CD4-positive, alpha-beta T cell (primary cell): ENCODE measurements at regions of chr18 and their contacts with region 1.

Region 1: GRCh38 chr18:11937874-11938478 is 29.9 kb upstream of the MPPE1 start:
- DNase-seq: peak; percentile 57 to 86 (median 71)
- ATAC-seq: peak; percentile 68
- H3K4me3 ChIP-seq: no peak overlapping the region
- H3K4me3 Mint-ChIP-seq: no peak overlapping the region
- H3K27ac ChIP-seq: no peak overlapping the region
- H3K27ac Mint-ChIP-seq: no peak overlapping the region
- H3K4me1 ChIP-seq: no peaks in the 10 kb centered on the region
- H3K4me1 Mint-ChIP-seq: peaks cover 4% of the 10 kb centered on the region
- H3K27me3 ChIP-seq: no peaks in the 10 kb centered on the region
- H3K27me3 Mint-ChIP-seq: no peaks in the 10 kb centered on the region
- CTCF ChIP-seq: peak; percentile 77

Region 2: GRCh38 chr18:10851824-10852319 is 1086.1 kb before region 1 on chr18:
- CTCF ChIA-PET with region 1: no interaction called
- POLR2A ChIA-PET with region 1: no interaction called
- intact Hi-C with region 1: loop called in 1 of 2 experiments (anchors 5 kb)
- DNase-seq: peak in 3 of 14 experiments; percentile 25 to 39 (median 28)
- ATAC-seq: no peak
- H3K4me3 ChIP-seq: no peak overlapping the region
- H3K4me3 Mint-ChIP-seq: no peak overlapping the region
- H3K27ac ChIP-seq: no peak overlapping the region
- H3K27ac Mint-ChIP-seq: no peak overlapping the region
- H3K4me1 ChIP-seq: no peaks in the 10 kb centered on the region
- H3K4me1 Mint-ChIP-seq: no peaks in the 10 kb centered on the region
- H3K27me3 ChIP-seq: peaks cover 0 to 3% of the 10 kb centered on the region in 2 experiments
- H3K27me3 Mint-ChIP-seq: peaks cover 4% of the 10 kb centered on the region
- CTCF ChIP-seq: peak; percentile 74

Region 3: GRCh38 chr18:11733031-11733430 is 204.9 kb before region 1 on chr18:
- CTCF ChIA-PET with region 1: interaction called, 4 read pairs
- POLR2A ChIA-PET with region 1: no interaction called
- intact Hi-C with region 1: loop called (anchors 1 to 5 kb)
- DNase-seq: peak; percentile 33 to 78 (median 58)
- ATAC-seq: peak; percentile 56
- H3K4me3 ChIP-seq: no peak overlapping the region
- H3K4me3 Mint-ChIP-seq: no peak overlapping the region
- H3K27ac ChIP-seq: no peak overlapping the region
- H3K27ac Mint-ChIP-seq: no peak overlapping the region
- H3K4me1 ChIP-seq: peaks cover 4% of the 10 kb centered on the region
- H3K4me1 Mint-ChIP-seq: no peaks in the 10 kb centered on the region
- H3K27me3 ChIP-seq: peaks cover 8 to 11% of the 10 kb centered on the region in 2 experiments
- H3K27me3 Mint-ChIP-seq: peaks cover 54% of the 10 kb centered on the region
- CTCF ChIP-seq: peak; percentile 85

Region 4: GRCh38 chr18:11995445-11996189 is 57.6 kb after region 1 on chr18:
- CTCF ChIA-PET with region 1: interaction called, 79 read pairs
- POLR2A ChIA-PET with region 1: interaction called, 12 read pairs
- intact Hi-C with region 1: loop called (anchors 1 kb)
- DNase-seq: peak; percentile 32 to 79 (median 50)
- ATAC-seq: peak; percentile 83
- H3K4me3 ChIP-seq: no peak overlapping the region
- H3K4me3 Mint-ChIP-seq: peak overlapping the region; percentile 53
- H3K27ac ChIP-seq: no peak overlapping the region
- H3K27ac Mint-ChIP-seq: no peak overlapping the region
- H3K4me1 ChIP-seq: peaks cover 11% of the 10 kb centered on the region
- H3K4me1 Mint-ChIP-seq: peaks cover 10% of the 10 kb centered on the region
- H3K27me3 ChIP-seq: no peaks in the 10 kb centered on the region
- H3K27me3 Mint-ChIP-seq: no peaks in the 10 kb centered on the region
- CTCF ChIP-seq: peak; percentile 72

Region 5: DNA sequence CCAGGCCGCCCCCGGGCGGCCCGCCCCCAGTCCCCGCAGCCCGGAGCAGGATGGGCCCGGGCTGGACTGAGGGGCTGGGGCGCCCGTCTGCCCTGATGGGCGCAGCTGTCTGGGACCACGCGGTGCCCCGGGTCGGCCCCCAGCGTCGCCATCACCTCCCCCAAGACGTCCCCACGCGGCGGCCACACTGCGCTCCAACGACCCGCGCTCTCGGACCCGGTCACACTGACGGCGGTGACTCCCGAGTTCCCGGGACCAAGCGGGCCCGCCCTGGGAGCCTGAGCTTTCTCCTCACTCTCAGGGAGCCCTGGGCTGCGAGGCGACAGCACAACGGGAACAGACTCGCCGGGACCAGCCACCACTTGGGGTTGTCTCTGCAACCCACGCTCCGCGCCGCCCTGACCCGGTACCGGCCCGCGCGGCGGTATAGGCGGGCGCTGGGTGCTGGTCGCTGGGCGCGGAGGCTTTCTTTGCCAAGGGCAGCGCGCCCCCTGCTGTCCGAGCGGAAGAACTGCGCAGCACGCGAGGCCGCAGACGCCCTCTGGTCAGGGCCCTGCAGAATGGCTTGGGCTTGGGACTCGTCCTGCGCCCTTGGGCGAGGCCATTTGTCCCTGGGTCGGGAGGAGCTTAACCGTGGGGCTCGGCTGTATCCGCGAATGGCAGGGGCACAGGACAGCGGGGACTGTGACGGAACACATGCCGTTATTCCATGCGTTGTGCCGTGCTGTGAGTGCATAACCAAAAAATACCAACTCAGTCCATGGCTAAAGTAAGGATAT is 100.9 kb after region 1 on chr18:
- CTCF ChIA-PET with region 1: interaction called, 15 read pairs
- POLR2A ChIA-PET with region 1: no interaction called
- intact Hi-C with region 1: loop called (anchors 1 kb)
- DNase-seq: peak; percentile 47 to 86 (median 66)
- ATAC-seq: peak; percentile 90
- H3K4me3 ChIP-seq: peak overlapping the region; percentile 51
- H3K4me3 Mint-ChIP-seq: no peak overlapping the region
- H3K27ac ChIP-seq: no peak overlapping the region
- H3K27ac Mint-ChIP-seq: no peak overlapping the region
- H3K4me1 ChIP-seq: peaks cover 13% of the 10 kb centered on the region
- H3K4me1 Mint-ChIP-seq: peaks cover 5% of the 10 kb centered on the region
- H3K27me3 ChIP-seq: peaks cover 6 to 15% of the 10 kb centered on the region in 2 experiments
- H3K27me3 Mint-ChIP-seq: peaks cover 29% of the 10 kb centered on the region
- CTCF ChIP-seq: peak; percentile 98

Region 6: DNA sequence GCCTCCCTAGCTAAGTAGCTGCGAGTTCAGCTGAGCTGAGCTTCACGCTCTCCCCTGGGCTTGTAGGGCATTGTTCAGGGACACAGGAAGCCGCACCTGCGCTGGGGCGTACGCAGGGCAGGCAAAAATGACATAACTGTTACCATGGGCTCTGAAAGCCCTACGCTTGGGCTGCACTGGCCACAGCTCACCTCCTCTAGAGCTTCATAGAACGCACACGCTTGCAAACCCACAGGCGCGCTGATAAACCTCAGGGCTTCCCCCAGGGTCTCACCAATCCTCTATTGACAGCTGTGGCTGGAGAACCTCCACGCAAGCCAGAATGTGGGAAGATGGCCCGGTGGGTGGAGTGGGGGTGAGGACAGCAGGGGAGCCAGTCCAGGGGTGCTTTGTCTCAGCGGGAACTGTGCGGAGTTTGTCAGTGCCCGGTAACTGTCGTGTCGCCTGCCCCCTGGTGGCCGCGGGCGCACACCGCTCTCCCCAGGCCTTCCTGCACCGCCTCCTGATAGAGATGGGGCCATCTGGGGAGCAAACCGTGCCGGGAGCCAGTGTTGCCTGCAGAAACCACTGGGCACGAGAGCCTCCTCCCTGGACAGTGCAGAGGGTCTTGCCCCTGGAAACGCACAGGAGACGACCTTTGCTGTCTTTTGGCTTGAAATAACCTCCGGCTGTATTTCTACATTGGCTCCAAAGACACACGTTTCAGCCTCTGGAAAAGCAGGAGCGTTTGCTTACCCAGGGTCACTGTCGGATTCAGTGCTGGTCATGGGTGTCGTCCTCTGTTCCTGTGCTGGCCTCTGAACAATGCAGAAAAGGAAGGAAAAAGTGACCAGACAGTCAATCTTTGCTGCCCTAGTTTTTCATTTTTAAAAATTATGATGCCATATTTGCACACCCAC is 299.2 kb after region 1 on chr18:
- CTCF ChIA-PET with region 1: no interaction called
- POLR2A ChIA-PET with region 1: no interaction called
- intact Hi-C with region 1: loop called in 1 of 2 experiments (anchors 5 kb)
- DNase-seq: peak; percentile 13 to 68 (median 44)
- ATAC-seq: peak; percentile 81
- H3K4me3 ChIP-seq: no peak overlapping the region
- H3K4me3 Mint-ChIP-seq: no peak overlapping the region
- H3K27ac ChIP-seq: no peak overlapping the region
- H3K27ac Mint-ChIP-seq: no peak overlapping the region
- H3K4me1 ChIP-seq: peaks cover 3% of the 10 kb centered on the region
- H3K4me1 Mint-ChIP-seq: no peaks in the 10 kb centered on the region
- H3K27me3 ChIP-seq: peaks cover 0 to 5% of the 10 kb centered on the region in 2 experiments
- H3K27me3 Mint-ChIP-seq: peaks cover 41% of the 10 kb centered on the region
- CTCF ChIP-seq: peak; percentile 76

Region 7: DNA sequence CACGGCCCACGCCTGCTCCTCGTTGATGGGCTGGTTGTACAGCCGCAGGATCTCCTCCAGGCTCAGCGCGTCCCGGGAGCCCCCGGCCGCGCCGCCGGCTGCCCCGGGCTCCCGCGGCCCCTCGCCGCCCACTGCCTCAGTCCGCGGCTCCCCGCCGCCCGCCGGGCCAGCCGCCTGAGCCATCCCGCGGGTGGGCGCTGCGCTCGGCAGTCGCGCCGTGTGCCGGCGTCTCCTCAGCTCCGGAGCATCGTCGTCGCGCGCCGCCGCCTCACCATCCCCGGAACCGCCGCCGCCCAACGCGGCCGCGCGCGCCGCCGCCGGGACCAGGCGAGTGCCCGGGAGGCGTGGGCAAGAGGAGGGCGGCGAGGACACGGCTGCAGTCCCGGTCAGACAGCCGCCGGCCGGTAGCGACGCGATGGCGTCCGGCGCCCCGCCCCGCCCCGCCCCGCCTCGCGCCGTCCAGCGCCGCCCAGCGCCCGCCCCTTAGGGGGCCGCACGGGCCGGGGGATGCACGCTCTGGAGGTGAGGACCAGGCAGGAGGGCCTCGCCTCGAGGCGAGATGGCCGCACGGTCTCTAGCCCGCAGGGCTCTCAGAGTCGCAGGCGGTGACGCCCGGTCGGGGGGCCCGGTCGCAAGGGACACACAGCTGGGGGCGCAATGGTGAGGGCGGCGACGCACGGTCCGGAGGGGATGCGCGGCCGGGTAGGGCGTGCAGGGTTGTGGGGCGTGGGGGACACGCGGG is 719.9 kb after region 1 on chr18 and contains the start of gene SPIRE1:
- CTCF ChIA-PET with region 1: no interaction called
- POLR2A ChIA-PET with region 1: no interaction called
- intact Hi-C with region 1: loop called in 1 of 2 experiments (anchors 2 kb)
- DNase-seq: peak in 11 of 14 experiments; percentile 6 to 75 (median 35)
- ATAC-seq: peak; percentile 61
- H3K4me3 ChIP-seq: peak within 1 kb of the TSS; percentile 45
- H3K4me3 Mint-ChIP-seq: peak within 1 kb of the TSS; percentile 93
- H3K27ac ChIP-seq: no peak within 1 kb of the TSS
- H3K27ac Mint-ChIP-seq: peak within 1 kb of the TSS; percentile 34
- H3K4me1 ChIP-seq: peaks cover 10% of the 10 kb centered on the region
- H3K4me1 Mint-ChIP-seq: peaks cover 12% of the 10 kb centered on the region
- H3K27me3 ChIP-seq: no peaks in the 10 kb centered on the region
- H3K27me3 Mint-ChIP-seq: peaks cover 18% of the 10 kb centered on the region
- CTCF ChIP-seq: no peak
- total RNA-seq, gene SPIRE1: 0.99 to 1.4 TPM